Panc1 (cell line): ENCODE measurements at regions of chr17 and their contacts with region 1.

Region 1: GRCh38 chr17:72952220-72952984 is 140.1 kb downstream of the SLC39A11 start:
- DNase-seq: no peak
- ATAC-seq: no peak
- H3K4me3 ChIP-seq: no peak overlapping the region
- H3K27ac ChIP-seq: no peak overlapping the region
- H3K4me1 ChIP-seq: peaks cover 8% of the 10 kb centered on the region
- H3K27me3 ChIP-seq: no peaks in the 10 kb centered on the region
- CTCF ChIP-seq: no peak

Region 2: GRCh38 chr17:72967977-72968585 is 15.7 kb after region 1 on chr17:
- CTCF ChIA-PET with region 1: no interaction called
- POLR2A ChIA-PET with region 1: interaction called, 10 read pairs
- in situ Hi-C with region 1: no loop called
- intact Hi-C with region 1: no loop called
- DNase-seq: no peak
- ATAC-seq: no peak
- H3K4me3 ChIP-seq: no peak overlapping the region
- H3K27ac ChIP-seq: no peak overlapping the region
- H3K4me1 ChIP-seq: peaks cover 4% of the 10 kb centered on the region; the same call in 1 of the 2 replicates
- H3K27me3 ChIP-seq: no peaks in the 10 kb centered on the region
- CTCF ChIP-seq: no peak

Region 3: DNA sequence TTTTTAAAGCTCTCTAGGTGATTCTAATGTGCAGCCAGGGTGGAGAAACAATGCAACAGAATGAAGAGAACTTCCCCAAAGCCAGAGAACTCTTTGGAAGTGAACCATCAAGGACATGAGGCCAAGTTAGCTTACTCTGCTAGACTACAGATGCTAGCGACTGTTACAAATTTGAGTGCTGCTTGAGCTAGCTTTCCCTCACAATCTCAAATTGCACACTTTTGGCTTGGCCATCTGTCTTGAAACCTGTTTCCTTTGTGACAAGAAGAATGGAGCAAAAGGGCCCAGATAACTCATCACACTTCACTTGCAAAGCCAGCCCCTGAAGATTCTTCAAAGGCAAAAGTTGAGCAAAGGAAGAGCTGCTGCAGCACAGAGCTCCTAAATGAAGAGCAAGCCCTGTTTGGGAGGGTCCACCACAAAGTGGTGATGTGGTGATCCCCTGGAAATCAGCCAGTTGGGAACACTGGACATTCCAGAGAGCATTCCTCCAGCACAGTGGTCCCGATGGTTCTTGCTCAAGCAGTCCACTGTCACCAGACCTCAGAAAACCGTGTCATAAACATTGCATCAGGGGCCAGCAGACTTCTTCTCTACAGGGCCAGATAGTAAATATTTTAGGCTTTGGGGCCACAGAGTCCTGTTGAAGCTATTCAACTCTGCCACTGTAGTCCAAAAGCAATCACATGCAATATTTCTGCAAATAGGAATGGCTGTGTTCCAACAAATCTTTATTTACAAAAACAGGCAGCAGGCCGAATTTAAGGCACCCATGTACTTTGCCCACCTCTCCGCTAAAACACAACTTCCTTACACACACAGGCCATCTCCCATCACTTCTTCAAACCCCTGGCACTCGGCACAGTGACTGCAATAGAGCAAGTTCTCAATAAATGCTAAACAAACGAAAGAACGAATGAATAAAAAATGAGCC is 118.9 kb after region 1 on chr17:
- CTCF ChIA-PET with region 1: no interaction called
- POLR2A ChIA-PET with region 1: no interaction called
- in situ Hi-C with region 1: no loop called
- intact Hi-C with region 1: no loop called
- DNase-seq: no peak
- ATAC-seq: no peak
- H3K4me3 ChIP-seq: no peak overlapping the region
- H3K27ac ChIP-seq: no peak overlapping the region
- H3K4me1 ChIP-seq: no peaks in the 10 kb centered on the region
- H3K27me3 ChIP-seq: no peaks in the 10 kb centered on the region
- CTCF ChIP-seq: no peak

Region 4: DNA sequence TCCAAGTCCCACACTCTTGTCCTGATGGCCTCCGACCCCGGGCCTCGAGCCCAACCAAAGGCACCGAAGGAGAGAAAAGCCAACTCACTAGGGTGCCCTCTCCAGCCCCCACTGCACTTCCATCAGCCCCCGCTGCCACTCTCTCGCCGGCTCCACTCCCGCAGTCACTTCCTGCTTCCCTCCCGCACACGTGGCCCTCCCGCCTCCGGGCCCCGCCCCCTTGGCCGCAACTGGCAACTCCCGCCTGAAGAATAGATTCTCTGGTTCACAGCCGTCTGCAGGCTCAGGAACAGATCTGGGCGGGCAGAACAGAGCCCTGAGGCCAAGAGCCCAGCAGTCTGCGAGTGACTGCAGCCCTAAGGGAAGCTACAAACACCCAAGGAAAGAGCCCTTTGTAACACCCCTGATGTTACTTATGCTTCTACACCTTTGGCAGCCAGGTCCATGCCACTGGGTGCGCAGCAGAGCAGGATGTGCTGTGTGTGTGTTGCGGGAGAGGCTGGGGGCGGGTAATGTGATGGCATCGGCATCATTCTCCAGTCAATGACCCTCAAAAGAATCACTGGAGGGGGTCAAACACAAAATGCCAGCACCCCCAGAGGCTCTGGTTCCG is 140.2 kb after region 1 on chr17 and contains the start of gene SLC39A11:
- CTCF ChIA-PET with region 1: no interaction called
- POLR2A ChIA-PET with region 1: interaction called, 11 read pairs
- in situ Hi-C with region 1: no loop called
- intact Hi-C with region 1: no loop called
- DNase-seq: peak; percentile 65
- ATAC-seq: peak; percentile 98
- H3K4me3 ChIP-seq: peak within 1 kb of the TSS; percentile 62 to 80
- H3K27ac ChIP-seq: peak within 1 kb of the TSS; percentile 84
- H3K4me1 ChIP-seq: peaks cover 21% of the 10 kb centered on the region
- H3K27me3 ChIP-seq: no peaks in the 10 kb centered on the region
- CTCF ChIP-seq: no peak
- total RNA-seq, gene SLC39A11: 56.1 TPM

Region 5: GRCh38 chr17:73379826-73380225 is 427.4 kb after region 1 on chr17:
- CTCF ChIA-PET with region 1: no interaction called
- POLR2A ChIA-PET with region 1: no interaction called
- in situ Hi-C with region 1: no loop called
- intact Hi-C with region 1: no loop called
- DNase-seq: no peak
- ATAC-seq: no peak
- H3K4me3 ChIP-seq: no peak overlapping the region
- H3K27ac ChIP-seq: no peak overlapping the region
- H3K4me1 ChIP-seq: no peaks in the 10 kb centered on the region
- H3K27me3 ChIP-seq: no peaks in the 10 kb centered on the region
- CTCF ChIP-seq: no peak

Region 6: DNA sequence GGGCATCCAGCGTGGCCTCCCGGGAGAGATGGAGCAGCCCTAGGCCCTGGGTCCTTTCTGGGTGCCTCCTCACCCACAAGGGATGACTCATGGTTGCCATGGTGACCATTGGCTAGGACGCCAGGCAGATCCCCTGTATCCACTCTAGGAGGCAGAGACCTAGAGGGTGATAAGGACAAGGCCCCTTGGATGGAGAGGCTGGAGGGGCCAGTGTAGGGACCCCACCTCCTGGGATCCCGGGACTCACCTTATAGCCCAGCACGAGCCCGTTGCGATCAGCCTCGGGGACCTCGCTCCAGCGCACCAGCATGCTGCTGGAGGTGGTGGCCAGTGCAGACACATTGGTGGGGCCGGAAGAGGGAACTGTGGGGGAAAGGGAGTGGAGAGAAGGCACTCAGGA is 441.6 kb after region 1 on chr17:
- CTCF ChIA-PET with region 1: no interaction called
- POLR2A ChIA-PET with region 1: no interaction called
- in situ Hi-C with region 1: no loop called
- intact Hi-C with region 1: no loop called
- DNase-seq: no peak
- ATAC-seq: no peak
- H3K4me3 ChIP-seq: no peak overlapping the region
- H3K27ac ChIP-seq: no peak overlapping the region
- H3K4me1 ChIP-seq: no peaks in the 10 kb centered on the region
- H3K27me3 ChIP-seq: no peaks in the 10 kb centered on the region; the same call in 1 of the 2 replicates
- CTCF ChIP-seq: no peak